ENCODE measurements at regions of chr6 and their contacts with region 1.

Region 1: GRCh38 chr6:131909408-131910218 is 41.6 kb downstream of the CCN2 start:
- DNase-seq: peak; percentile 61
- H3K4me3 ChIP-seq: no peak overlapping the region
- H3K27ac ChIP-seq: no peak overlapping the region
- H3K4me1 ChIP-seq: peaks cover 4% of the 10 kb centered on the region
- H3K27me3 ChIP-seq: peaks cover 3% of the 10 kb centered on the region
- CTCF ChIP-seq: peak; percentile 80 to 88

Region 2: GRCh38 chr6:131694831-131695426 is 214.7 kb before region 1 on chr6:
- CTCF ChIA-PET with region 1: no interaction called
- dilution Hi-C with region 1: no loop called
- in situ Hi-C with region 1: loop called (anchors 10 kb)
- intact Hi-C with region 1: loop called (anchors 1 kb)
- DNase-seq: peak; percentile 43
- H3K4me3 ChIP-seq: no peak overlapping the region
- H3K27ac ChIP-seq: no peak overlapping the region
- H3K4me1 ChIP-seq: no peaks in the 10 kb centered on the region
- H3K27me3 ChIP-seq: peaks cover 2% of the 10 kb centered on the region
- CTCF ChIP-seq: peak; percentile 89 to 91

Region 3: DNA sequence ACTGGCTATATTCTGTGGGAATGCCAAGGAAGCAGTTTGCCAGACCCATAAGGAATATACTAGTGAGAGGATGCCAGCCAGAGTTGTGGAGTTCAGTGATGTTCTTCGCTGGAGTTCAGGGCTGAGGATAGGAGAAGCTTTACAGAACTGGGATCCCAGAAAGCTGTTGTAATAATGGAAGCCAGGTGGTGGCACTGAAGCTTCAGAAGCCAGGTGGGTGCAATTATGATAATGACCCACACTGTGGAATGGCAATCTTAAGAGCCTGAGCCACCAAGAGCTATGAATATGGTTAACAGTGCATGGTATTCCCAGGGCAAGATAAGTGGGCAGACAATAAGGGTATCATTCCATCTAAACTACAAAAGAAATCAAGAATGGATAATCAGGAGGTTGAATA is 126.8 kb before region 1 on chr6:
- CTCF ChIA-PET with region 1: interaction called, 8 read pairs
- dilution Hi-C with region 1: no loop called
- in situ Hi-C with region 1: no loop called
- intact Hi-C with region 1: loop called (anchors 1 kb)
- DNase-seq: no peak
- H3K4me3 ChIP-seq: no peak overlapping the region
- H3K27ac ChIP-seq: no peak overlapping the region
- H3K4me1 ChIP-seq: no peaks in the 10 kb centered on the region
- H3K27me3 ChIP-seq: peaks cover 2% of the 10 kb centered on the region
- CTCF ChIP-seq: peak; percentile 10 to 47

Region 4: GRCh38 chr6:132115714-132116366 is 206.2 kb after region 1 on chr6:
- CTCF ChIA-PET with region 1: no interaction called
- dilution Hi-C with region 1: no loop called
- in situ Hi-C with region 1: no loop called
- intact Hi-C with region 1: no loop called
- DNase-seq: peak; percentile 83
- H3K4me3 ChIP-seq: peak overlapping the region in 2 of 3 experiments; percentile 45 to 51
- H3K27ac ChIP-seq: peak overlapping the region; percentile 50
- H3K4me1 ChIP-seq: peaks cover 32% of the 10 kb centered on the region
- H3K27me3 ChIP-seq: no peaks in the 10 kb centered on the region
- CTCF ChIP-seq: no peak

Region 5: GRCh38 chr6:132218059-132218696 is 308.6 kb after region 1 on chr6:
- CTCF ChIA-PET with region 1: no interaction called
- dilution Hi-C with region 1: no loop called
- in situ Hi-C with region 1: loop called in 1 of 2 experiments (anchors 25 kb)
- intact Hi-C with region 1: no loop called
- DNase-seq: no peak
- H3K4me3 ChIP-seq: no peak overlapping the region
- H3K27ac ChIP-seq: no peak overlapping the region
- H3K4me1 ChIP-seq: no peaks in the 10 kb centered on the region
- H3K27me3 ChIP-seq: no peaks in the 10 kb centered on the region
- CTCF ChIP-seq: peak; percentile 32 to 56

Region 6: GRCh38 chr6:132483779-132484679 is 574.4 kb after region 1 on chr6:
- CTCF ChIA-PET with region 1: interaction called, 4 read pairs
- dilution Hi-C with region 1: no loop called
- in situ Hi-C with region 1: loop called in 1 of 2 experiments (anchors 25 kb)
- intact Hi-C with region 1: loop called (anchors 10 kb)
- DNase-seq: peak; percentile 39
- H3K4me3 ChIP-seq: no peak overlapping the region
- H3K27ac ChIP-seq: no peak overlapping the region
- H3K4me1 ChIP-seq: peaks cover 6% of the 10 kb centered on the region
- H3K27me3 ChIP-seq: no peaks in the 10 kb centered on the region
- CTCF ChIP-seq: peak; percentile 63 to 68

Measured in mammary epithelial cell (primary cell).